ENCODE measurements at regions of chr11 and their contacts with region 1.

Region 1: DNA sequence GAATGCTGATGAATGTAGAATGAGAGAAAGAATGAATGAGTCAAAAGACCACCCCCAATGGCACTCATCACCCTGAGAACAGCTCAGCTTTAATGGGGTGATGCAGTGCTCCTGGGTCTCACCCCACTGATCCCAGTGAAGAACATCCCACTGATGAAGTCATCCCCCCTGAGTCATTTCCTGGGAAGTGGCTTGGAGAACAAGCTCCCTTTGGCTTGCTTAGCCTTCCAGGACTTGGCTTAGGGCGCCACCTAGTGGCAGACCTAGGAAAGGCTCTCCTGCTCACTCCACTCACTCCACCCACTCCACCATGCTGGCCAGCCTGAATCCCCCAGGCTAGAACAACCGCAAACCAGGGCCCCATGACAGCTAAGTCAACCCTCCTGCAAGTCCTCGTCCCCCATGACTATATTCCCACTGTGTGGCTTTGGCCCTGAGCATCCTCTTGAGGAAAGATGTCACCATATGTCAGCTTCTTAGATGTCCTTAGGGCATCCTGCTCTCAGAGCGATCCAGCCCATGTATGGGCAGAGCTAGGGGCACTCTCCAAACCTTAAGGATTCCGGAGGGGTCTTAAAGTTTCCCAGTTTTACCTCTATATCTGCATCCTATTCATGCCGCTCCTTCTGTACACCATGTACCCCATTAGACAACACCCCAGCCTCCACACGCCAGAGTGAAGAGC is 17.8 kb upstream of the TMPRSS13 start:
- DNase-seq: no peak
- ATAC-seq: peak; percentile 76
- H3K4me3 ChIP-seq: no peak overlapping the region
- H3K27ac ChIP-seq: no peak overlapping the region
- H3K4me1 ChIP-seq: peaks cover 39% of the 10 kb centered on the region
- H3K27me3 ChIP-seq: no peaks in the 10 kb centered on the region
- CTCF ChIP-seq: peak; percentile 95 to 96 (median 95)
- EP300 ChIP-seq: no peak
- POLR2A ChIP-seq: no peak
- RAD21 ChIP-seq: peak; percentile 94

Region 2: GRCh38 chr11:117823294-117823945 is 123.6 kb before region 1 on chr11:
- CTCF ChIA-PET with region 1: interaction called, 503 read pairs
- POLR2A ChIA-PET with region 1: interaction called, 16 read pairs
- RAD21 ChIA-PET with region 1: interaction called, 393 read pairs
- SMC1A ChIA-PET with region 1: interaction called, 183 read pairs
- in situ Hi-C with region 1: no loop called
- intact Hi-C with region 1: loop called (anchors 1 kb)
- DNase-seq: no peak
- ATAC-seq: peak; percentile 62
- H3K4me3 ChIP-seq: no peak overlapping the region
- H3K27ac ChIP-seq: no peak overlapping the region
- H3K4me1 ChIP-seq: peaks cover 18% of the 10 kb centered on the region
- H3K27me3 ChIP-seq: no peaks in the 10 kb centered on the region
- CTCF ChIP-seq: peak; percentile 31 to 58 (median 39); a peak in 4 of 6 replicates
- EP300 ChIP-seq: no peak
- POLR2A ChIP-seq: no peak
- RAD21 ChIP-seq: peak; percentile 53

Region 3: DNA sequence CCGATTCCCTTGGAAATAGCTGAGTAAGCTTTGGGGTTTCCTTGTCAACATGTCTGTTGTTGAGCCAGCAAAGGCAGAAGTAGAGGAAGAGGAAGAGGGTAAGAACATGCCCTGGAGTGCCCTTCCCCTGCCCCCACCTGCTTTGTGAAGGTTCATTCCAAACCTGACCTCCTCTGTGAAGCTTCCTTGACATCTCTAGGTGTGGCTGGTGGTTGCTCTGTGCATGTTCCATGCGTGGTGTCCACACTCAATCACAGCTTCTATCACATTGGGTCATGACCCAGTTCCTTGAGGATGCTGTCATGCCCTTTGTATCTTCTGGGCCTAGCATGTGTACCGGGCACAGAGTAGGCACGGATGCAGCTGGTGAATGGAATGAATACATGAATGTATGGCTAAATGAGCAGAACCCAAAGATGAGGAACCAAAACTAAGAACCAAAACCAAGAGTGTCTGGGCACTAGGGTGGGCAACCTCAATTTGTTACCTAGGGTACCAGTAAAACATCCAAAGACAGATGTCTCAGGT is 46.8 kb before region 1 on chr11:
- CTCF ChIA-PET with region 1: interaction called, 83 read pairs
- POLR2A ChIA-PET with region 1: interaction called, 3 read pairs
- RAD21 ChIA-PET with region 1: interaction called, 16 read pairs
- SMC1A ChIA-PET with region 1: interaction called, 17 read pairs
- in situ Hi-C with region 1: no loop called
- intact Hi-C with region 1: no loop called
- DNase-seq: peak; percentile 60
- ATAC-seq: peak; percentile 93
- H3K4me3 ChIP-seq: no peak overlapping the region
- H3K27ac ChIP-seq: no peak overlapping the region
- H3K4me1 ChIP-seq: peaks cover 4% of the 10 kb centered on the region
- H3K27me3 ChIP-seq: no peaks in the 10 kb centered on the region
- CTCF ChIP-seq: no peak
- EP300 ChIP-seq: no peak
- POLR2A ChIP-seq: no peak
- RAD21 ChIP-seq: no peak

Region 4: GRCh38 chr11:117932067-117932370 is 15.0 kb before region 1 on chr11:
- CTCF ChIA-PET with region 1: interaction called, 90 read pairs
- POLR2A ChIA-PET with region 1: interaction called, 5 read pairs
- RAD21 ChIA-PET with region 1: interaction called, 91 read pairs
- SMC1A ChIA-PET with region 1: interaction called, 160 read pairs
- in situ Hi-C with region 1: no loop called
- intact Hi-C with region 1: no loop called
- DNase-seq: peak; percentile 78
- ATAC-seq: peak; percentile 80
- H3K4me3 ChIP-seq: no peak overlapping the region
- H3K27ac ChIP-seq: no peak overlapping the region; the same call in 1 of the 2 replicates
- H3K4me1 ChIP-seq: peaks cover 40% of the 10 kb centered on the region
- H3K27me3 ChIP-seq: no peaks in the 10 kb centered on the region
- CTCF ChIP-seq: no peak
- EP300 ChIP-seq: peak in 1 of 2 experiments; percentile 57; a peak in 1 of 4 replicates
- POLR2A ChIP-seq: no peak
- RAD21 ChIP-seq: no peak

Region 5: DNA sequence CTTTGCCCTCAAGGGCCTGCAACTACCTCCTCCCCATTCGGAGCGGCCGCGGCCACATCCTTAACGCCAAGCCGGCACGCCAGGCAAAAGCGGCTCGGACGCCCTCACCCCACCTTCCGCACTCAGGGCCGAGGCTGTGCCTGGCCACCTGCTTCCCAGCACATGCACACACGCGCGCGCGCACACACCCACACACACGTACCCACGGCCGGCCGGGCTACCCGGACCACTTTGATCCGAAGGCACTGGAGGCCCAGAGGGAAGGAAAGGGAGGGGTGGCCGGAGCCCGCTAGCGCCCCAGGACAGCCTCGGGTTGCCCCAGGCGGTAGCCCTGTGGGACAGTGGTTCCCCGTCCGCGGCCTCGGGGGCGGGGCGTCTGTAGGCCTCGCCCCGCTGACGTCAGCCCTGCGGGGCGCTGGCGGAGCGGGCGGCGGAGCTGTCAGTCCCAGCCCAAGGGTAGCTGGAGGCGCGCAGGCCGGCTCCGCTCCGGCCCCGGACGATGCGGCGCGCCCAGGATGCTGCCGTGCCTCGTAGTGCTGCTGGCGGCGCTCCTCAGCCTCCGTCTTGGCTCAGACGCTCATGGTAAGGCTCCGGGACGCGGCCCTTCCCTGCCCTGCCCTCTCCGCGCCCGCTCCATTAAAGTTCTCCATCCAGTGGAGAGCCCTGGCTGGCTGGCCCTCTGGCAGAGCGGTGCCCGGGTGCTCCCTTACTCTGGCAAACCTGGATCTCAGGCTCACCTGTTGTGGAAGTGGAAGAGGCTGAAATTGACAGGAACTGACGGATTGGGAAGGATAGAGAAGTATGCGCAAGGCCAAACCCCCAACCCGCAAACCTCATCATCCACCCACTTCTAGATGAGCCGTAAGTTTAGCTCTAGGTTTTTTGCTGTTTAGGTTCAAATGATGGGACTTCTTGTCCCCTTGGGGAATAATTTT is 39.2 kb after region 1 on chr11 and contains the start of gene IL10RA:
- CTCF ChIA-PET with region 1: interaction called, 61 read pairs
- POLR2A ChIA-PET with region 1: interaction called, 8 read pairs
- RAD21 ChIA-PET with region 1: interaction called, 60 read pairs
- SMC1A ChIA-PET with region 1: interaction called, 167 read pairs
- in situ Hi-C with region 1: no loop called
- intact Hi-C with region 1: loop called (anchors 2 kb)
- DNase-seq: no peak
- ATAC-seq: peak; percentile 87
- H3K4me3 ChIP-seq: peak within 1 kb of the TSS; percentile 79
- H3K27ac ChIP-seq: peak within 1 kb of the TSS; percentile 84
- H3K4me1 ChIP-seq: peaks cover 18% of the 10 kb centered on the region
- H3K27me3 ChIP-seq: no peaks in the 10 kb centered on the region
- CTCF ChIP-seq: peak in 2 of 3 experiments; percentile 10 to 15; a peak in 1 of 6 replicates
- EP300 ChIP-seq: 0 out of 4 replicates have a peak, but pooled peaks of 1 of the 2 experiments have one; percentile 26
- POLR2A ChIP-seq: peak; percentile 99
- RAD21 ChIP-seq: no peak
- polyA plus RNA-seq, gene IL10RA: 0.77 to 1.4 TPM

Region 6: GRCh38 chr11:118051611-118052461 is 104.9 kb after region 1 on chr11:
- CTCF ChIA-PET with region 1: interaction called, 364 read pairs
- POLR2A ChIA-PET with region 1: interaction called, 7 read pairs
- RAD21 ChIA-PET with region 1: interaction called, 248 read pairs
- SMC1A ChIA-PET with region 1: interaction called, 295 read pairs
- in situ Hi-C with region 1: loop called (anchors 5 kb)
- intact Hi-C with region 1: loop called (anchors 1 kb)
- DNase-seq: peak; percentile 23
- ATAC-seq: peak; percentile 81
- H3K4me3 ChIP-seq: no peak overlapping the region
- H3K27ac ChIP-seq: no peak overlapping the region
- H3K4me1 ChIP-seq: peaks cover 18% of the 10 kb centered on the region
- H3K27me3 ChIP-seq: no peaks in the 10 kb centered on the region
- CTCF ChIP-seq: no peak
- EP300 ChIP-seq: peak; percentile 14 to 42; a peak in 2 of 4 replicates
- POLR2A ChIP-seq: no peak
- RAD21 ChIP-seq: no peak

Region 7: GRCh38 chr11:118071416-118072030 is 124.5 kb after region 1 on chr11:
- CTCF ChIA-PET with region 1: no interaction called
- POLR2A ChIA-PET with region 1: no interaction called
- RAD21 ChIA-PET with region 1: no interaction called
- SMC1A ChIA-PET with region 1: no interaction called
- in situ Hi-C with region 1: no loop called
- intact Hi-C with region 1: no loop called
- DNase-seq: no peak
- ATAC-seq: no peak
- H3K4me3 ChIP-seq: no peak overlapping the region
- H3K27ac ChIP-seq: no peak overlapping the region
- H3K4me1 ChIP-seq: no peaks in the 10 kb centered on the region
- H3K27me3 ChIP-seq: no peaks in the 10 kb centered on the region
- CTCF ChIP-seq: no peak
- EP300 ChIP-seq: no peak
- POLR2A ChIP-seq: no peak
- RAD21 ChIP-seq: no peak

Measured in GM12878 (cell line).